IMR-90 (cell line): ENCODE measurements at regions of chr7 and their contacts with region 1.

Region 1: GRCh38 chr7:66183700-66184099 is 21.4 kb upstream of the TPST1 start:
- DNase-seq: peak; percentile 96
- ATAC-seq: peak; percentile 92
- H3K4me3 ChIP-seq: no peak overlapping the region
- H3K27ac ChIP-seq: peak overlapping the region; percentile 42; the same call in 1 of the 2 replicates
- H3K4me1 ChIP-seq: peaks cover 11% of the 10 kb centered on the region
- H3K27me3 ChIP-seq: no peaks in the 10 kb centered on the region
- CTCF ChIP-seq: no peak
- POLR2A ChIP-seq: no peak
- RAD21 ChIP-seq: no peak

Region 2: DNA sequence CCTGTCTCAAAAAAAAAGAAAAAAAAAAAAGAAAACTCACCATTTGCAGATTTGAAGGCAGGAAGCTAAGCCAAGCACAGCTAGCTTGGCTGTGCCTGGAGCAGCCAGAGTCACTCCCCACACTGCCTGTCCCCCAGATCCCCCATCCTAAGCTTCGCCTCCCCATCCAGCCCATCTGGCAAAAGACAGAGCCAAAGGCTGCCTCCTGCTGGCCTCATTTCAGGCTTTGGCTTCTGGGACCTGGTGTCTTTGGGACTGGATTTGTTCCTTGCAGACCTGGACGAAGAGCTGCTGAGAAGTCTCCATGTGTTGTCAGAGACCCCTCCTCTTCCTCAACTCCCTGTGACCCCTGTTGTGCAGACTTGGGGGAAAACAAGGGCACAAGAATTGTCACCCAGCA is 100.0 kb before region 1 on chr7:
- CTCF ChIA-PET with region 1: no interaction called
- POLR2A ChIA-PET with region 1: no interaction called
- dilution Hi-C with region 1: no loop called
- in situ Hi-C with region 1: no loop called
- intact Hi-C with region 1: no loop called
- DNase-seq: no peak
- ATAC-seq: no peak
- H3K4me3 ChIP-seq: no peak overlapping the region
- H3K27ac ChIP-seq: no peak overlapping the region
- H3K4me1 ChIP-seq: no peaks in the 10 kb centered on the region
- H3K27me3 ChIP-seq: no peaks in the 10 kb centered on the region
- CTCF ChIP-seq: no peak
- POLR2A ChIP-seq: no peak
- RAD21 ChIP-seq: no peak

Region 3: GRCh38 chr7:66170309-66171231 is 13.1 kb before region 1 on chr7:
- CTCF ChIA-PET with region 1: no interaction called
- POLR2A ChIA-PET with region 1: interaction called, 11 read pairs
- dilution Hi-C with region 1: no loop called
- in situ Hi-C with region 1: no loop called
- intact Hi-C with region 1: no loop called
- DNase-seq: peak; percentile 15
- ATAC-seq: no peak
- H3K4me3 ChIP-seq: no peak overlapping the region
- H3K27ac ChIP-seq: no peak overlapping the region
- H3K4me1 ChIP-seq: peaks cover 10% of the 10 kb centered on the region
- H3K27me3 ChIP-seq: no peaks in the 10 kb centered on the region
- CTCF ChIP-seq: no peak
- POLR2A ChIP-seq: no peak
- RAD21 ChIP-seq: no peak